ENCODE measurements at regions of chr18 and their contacts with region 1.

Region 1: DNA sequence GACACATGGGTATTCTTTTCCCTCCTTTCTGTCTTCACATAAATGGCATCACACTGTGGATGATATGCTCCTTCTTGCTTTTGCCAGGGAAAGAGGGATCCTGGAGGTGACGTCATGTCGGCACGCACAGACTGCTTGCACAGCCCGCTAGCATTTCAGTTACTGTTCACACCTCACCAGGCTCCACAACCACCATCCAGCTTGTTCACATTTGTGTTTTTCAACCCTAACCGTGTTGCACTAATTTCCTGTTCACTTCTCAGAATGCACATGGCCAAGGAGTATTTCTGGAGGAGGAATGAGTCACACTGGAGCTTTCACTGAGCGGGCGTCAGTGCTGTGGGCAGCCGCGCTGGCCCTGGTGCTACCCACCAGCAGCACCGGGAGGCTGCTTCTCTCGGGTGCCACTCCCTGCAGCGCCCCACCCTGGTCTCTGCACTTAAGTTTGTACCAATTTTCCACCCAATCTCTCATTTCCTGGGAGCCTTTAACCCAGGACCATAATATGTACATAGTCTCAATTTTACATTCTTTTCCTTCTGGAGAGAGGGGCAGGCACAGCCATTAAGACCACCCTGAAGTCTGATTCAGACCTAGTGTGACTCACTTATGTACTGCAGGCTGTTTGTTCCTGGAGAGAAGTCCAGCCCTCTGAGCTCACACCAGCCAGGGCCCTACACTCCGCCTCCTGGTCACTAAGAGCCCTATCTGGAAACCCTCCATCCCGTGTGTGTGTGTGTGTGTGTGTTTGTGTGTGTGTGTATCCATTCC is 65.1 kb downstream of the MBP start:
- DNase-seq: peak; percentile 91
- H3K4me3 Mint-ChIP-seq: peak overlapping the region; percentile 50
- H3K27ac Mint-ChIP-seq: peak overlapping the region; percentile 96
- H3K4me1 Mint-ChIP-seq: peaks cover 91% of the 10 kb centered on the region
- H3K27me3 Mint-ChIP-seq: no peaks in the 10 kb centered on the region
- CTCF ChIP-seq: peak; percentile 16

Region 2: GRCh38 chr18:76445275-76445674 is 622.2 kb before region 1 on chr18:
- CTCF ChIA-PET with region 1: no interaction called
- intact Hi-C with region 1: no loop called
- DNase-seq: peak; percentile 26
- H3K4me3 Mint-ChIP-seq: peak overlapping the region; percentile 14
- H3K27ac Mint-ChIP-seq: no peak overlapping the region
- H3K4me1 Mint-ChIP-seq: peaks cover 68% of the 10 kb centered on the region
- H3K27me3 Mint-ChIP-seq: no peaks in the 10 kb centered on the region
- CTCF ChIP-seq: no peak

Region 3: DNA sequence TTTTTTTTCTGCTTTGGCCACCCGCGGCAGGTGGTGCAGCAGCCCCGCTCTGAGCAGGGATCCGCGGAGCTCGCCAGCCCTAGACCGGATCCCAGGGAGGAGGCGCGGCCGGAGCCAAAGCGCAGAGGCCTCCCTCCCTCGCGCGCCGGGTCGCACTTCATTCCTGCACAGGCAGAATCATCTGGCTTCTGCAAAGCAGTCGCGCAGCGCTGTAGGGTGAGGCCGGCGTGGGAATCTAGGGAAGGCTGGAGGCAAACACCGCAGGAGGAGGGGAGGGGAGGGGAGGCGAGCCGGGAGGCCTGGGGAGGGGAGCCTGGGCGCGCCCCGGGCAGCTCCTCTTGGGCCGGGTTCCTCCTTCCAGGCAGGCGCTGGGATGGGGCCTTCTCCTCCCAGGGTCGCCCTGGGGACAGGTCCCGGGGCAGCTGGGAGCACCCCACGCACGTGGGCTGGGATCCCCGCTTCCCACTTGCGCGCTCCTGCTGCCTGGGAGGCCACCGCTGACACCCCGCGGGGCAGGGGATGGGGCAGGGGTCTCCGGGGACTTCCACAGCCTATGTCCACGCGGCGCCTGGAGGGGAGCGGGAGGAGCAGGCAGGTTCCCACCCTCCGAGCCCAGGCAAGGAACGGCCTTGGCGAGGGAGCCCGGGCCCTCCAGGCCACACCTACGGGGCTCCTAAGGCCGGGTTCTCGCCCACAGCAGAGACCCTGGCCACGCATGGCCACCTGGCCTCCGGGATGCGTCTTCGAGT is 20.1 kb after region 1 on chr18:
- CTCF ChIA-PET with region 1: interaction called, 13 read pairs
- intact Hi-C with region 1: loop called (anchors 2 kb)
- DNase-seq: peak; percentile 67
- H3K4me3 Mint-ChIP-seq: peak overlapping the region; percentile 67
- H3K27ac Mint-ChIP-seq: peak overlapping the region; percentile 45
- H3K4me1 Mint-ChIP-seq: peaks cover 85% of the 10 kb centered on the region
- H3K27me3 Mint-ChIP-seq: no peaks in the 10 kb centered on the region
- CTCF ChIP-seq: no peak

Region 4: GRCh38 chr18:77101410-77102258 is 34.2 kb after region 1 on chr18:
- CTCF ChIA-PET with region 1: interaction called, 8 read pairs
- intact Hi-C with region 1: loop called (anchors 1 kb)
- DNase-seq: peak; percentile 94
- H3K4me3 Mint-ChIP-seq: peak overlapping the region; percentile 57
- H3K27ac Mint-ChIP-seq: peak overlapping the region; percentile 94
- H3K4me1 Mint-ChIP-seq: peaks cover 81% of the 10 kb centered on the region
- H3K27me3 Mint-ChIP-seq: no peaks in the 10 kb centered on the region
- CTCF ChIP-seq: no peak

Region 5: DNA sequence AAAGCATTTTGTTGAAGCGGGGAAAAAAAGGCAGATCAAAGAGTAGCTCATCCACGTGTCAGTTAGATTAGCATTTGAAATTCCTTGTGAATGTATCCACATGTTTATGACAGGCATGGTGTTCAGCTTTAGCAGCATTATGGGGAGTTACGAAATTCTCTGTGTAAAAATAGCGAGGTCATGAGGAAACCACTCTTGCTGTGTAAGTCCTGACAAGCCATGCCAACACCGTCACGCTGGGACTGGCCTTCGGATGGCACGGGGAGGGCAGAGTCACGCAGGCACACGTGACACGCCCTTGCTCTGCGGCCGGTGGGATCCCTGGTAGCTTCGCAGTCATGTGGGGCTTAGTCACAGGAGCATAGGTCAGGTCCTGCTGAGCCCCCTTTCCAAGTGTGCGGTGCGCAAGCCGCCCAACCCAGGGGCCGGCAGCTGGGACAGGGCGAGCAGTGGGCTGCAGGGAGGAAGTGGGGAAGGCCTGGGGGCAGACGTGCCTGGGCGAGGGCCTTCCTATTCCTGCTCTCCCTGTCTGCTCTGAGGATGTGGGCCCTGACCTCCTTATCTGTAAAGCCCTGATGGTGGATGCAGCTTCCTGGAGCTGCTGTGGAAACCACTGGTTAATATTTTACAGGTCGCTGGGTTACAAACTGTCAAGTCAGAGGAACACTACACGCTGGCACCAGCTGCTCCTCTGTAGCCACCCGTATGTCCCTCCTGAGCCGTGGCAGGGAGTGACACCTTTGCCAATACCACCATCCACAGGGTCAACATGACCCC is 47.1 kb after region 1 on chr18:
- CTCF ChIA-PET with region 1: interaction called, 24 read pairs
- intact Hi-C with region 1: loop called (anchors 1 kb)
- DNase-seq: peak; percentile 97
- H3K4me3 Mint-ChIP-seq: peak overlapping the region; percentile 54
- H3K27ac Mint-ChIP-seq: peak overlapping the region; percentile 96
- H3K4me1 Mint-ChIP-seq: peaks cover 79% of the 10 kb centered on the region
- H3K27me3 Mint-ChIP-seq: no peaks in the 10 kb centered on the region
- CTCF ChIP-seq: no peak

Region 6: GRCh38 chr18:77147418-77147852 is 80.0 kb after region 1 on chr18:
- CTCF ChIA-PET with region 1: no interaction called
- intact Hi-C with region 1: no loop called
- DNase-seq: no peak
- H3K4me3 Mint-ChIP-seq: no peak overlapping the region
- H3K27ac Mint-ChIP-seq: no peak overlapping the region
- H3K4me1 Mint-ChIP-seq: peaks cover 7% of the 10 kb centered on the region
- H3K27me3 Mint-ChIP-seq: peaks cover 50% of the 10 kb centered on the region
- CTCF ChIP-seq: no peak

Region 7: DNA sequence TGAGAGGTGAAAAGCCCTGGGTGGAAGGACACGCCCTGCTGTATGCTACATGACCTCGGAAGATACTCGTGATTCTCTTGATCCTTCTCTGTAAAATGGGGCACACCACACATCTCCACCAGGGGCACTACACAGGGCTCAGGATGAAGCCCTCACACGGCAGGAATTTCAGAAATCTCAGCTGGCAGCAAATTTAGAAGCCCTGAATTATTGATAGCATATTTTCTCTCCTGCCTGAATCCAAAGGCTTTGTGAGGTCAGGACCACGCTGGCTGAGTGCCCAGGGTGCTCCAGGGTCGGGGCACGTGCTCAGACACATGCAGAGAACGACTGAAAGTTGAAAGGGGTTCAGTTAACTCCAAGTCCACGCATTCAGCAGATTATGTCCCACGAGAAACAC is 140.1 kb after region 1 on chr18:
- CTCF ChIA-PET with region 1: interaction called, 13 read pairs
- intact Hi-C with region 1: loop called (anchors 5 kb)
- DNase-seq: peak; percentile 87
- H3K4me3 Mint-ChIP-seq: no peak overlapping the region
- H3K27ac Mint-ChIP-seq: no peak overlapping the region
- H3K4me1 Mint-ChIP-seq: peaks cover 20% of the 10 kb centered on the region
- H3K27me3 Mint-ChIP-seq: peaks cover 27% of the 10 kb centered on the region
- CTCF ChIP-seq: peak; percentile 98

Measured in Calu3 (cell line).